CD4-positive, alpha-beta memory T cell (primary cell): ENCODE measurements at regions of chr20 and their contacts with region 1.

Region 1: GRCh38 chr20:21529863-21530262 is 16.0 kb upstream of the NKX2-2 start:
- DNase-seq: no peak
- H3K4me3 ChIP-seq: no peak overlapping the region
- H3K4me3 Mint-ChIP-seq: no peak overlapping the region
- H3K27ac ChIP-seq: no peak overlapping the region
- H3K27ac Mint-ChIP-seq: peak overlapping the region in 1 of 7 donors; percentile 49
- H3K4me1 ChIP-seq: no peaks in the 10 kb centered on the region
- H3K4me1 Mint-ChIP-seq: peaks cover 0 to 5% (median 3%) of the 10 kb centered on the region in 4 donors
- H3K27me3 ChIP-seq: peaks cover 13% of the 10 kb centered on the region
- H3K27me3 Mint-ChIP-seq: peaks cover 18 to 35% of the 10 kb centered on the region in 2 donors

Region 2: DNA sequence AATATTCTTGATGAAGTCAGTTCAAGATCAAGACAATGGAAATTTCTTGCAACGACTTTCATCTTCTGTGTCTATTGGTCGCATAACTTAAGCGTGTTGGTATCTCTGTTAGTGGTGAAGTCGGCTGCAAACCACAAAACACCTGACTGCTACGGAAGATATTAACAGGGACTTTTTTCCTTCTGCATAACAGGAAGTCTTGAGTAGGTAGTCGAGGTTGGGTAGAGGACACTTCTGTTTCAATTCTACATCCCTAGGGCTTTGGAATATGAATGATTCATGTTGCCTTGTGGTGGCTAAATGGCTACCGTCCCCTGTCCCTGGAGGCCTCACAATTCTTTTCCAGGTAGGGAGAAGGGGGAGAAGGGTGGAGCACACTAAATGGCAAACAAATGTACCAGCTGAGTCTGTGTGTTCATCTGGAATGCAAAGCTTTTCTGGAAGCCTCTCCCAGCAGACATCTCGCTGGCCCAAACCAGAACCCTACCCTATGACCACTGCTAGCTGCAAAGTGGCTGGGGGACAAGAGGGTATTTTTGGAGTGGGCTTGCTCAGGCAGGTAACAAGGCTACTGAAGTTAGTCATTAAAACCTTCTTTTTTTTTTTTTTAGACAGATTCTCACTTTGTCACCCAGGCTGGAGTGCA is 18.6 kb after region 1 on chr20:
- CTCF ChIA-PET with region 1: interaction called, 21 read pairs
- POLR2A ChIA-PET with region 1: interaction called, 3 read pairs
- intact Hi-C with region 1: loop called (anchors 2 kb)
- DNase-seq: peak; percentile 74 to 86 (median 80)
- H3K4me3 ChIP-seq: peak overlapping the region; percentile 10 to 32
- H3K4me3 Mint-ChIP-seq: peak overlapping the region; percentile 74 to 88 (median 80)
- H3K27ac ChIP-seq: peak overlapping the region; percentile 43
- H3K27ac Mint-ChIP-seq: peak overlapping the region; percentile 84 to 97 (median 95)
- H3K4me1 ChIP-seq: peaks cover 44% of the 10 kb centered on the region
- H3K4me1 Mint-ChIP-seq: peaks cover 22 to 41% (median 32%) of the 10 kb centered on the region in 4 donors
- H3K27me3 ChIP-seq: no peaks in the 10 kb centered on the region
- H3K27me3 Mint-ChIP-seq: no peaks in the 10 kb centered on the region

Region 3: DNA sequence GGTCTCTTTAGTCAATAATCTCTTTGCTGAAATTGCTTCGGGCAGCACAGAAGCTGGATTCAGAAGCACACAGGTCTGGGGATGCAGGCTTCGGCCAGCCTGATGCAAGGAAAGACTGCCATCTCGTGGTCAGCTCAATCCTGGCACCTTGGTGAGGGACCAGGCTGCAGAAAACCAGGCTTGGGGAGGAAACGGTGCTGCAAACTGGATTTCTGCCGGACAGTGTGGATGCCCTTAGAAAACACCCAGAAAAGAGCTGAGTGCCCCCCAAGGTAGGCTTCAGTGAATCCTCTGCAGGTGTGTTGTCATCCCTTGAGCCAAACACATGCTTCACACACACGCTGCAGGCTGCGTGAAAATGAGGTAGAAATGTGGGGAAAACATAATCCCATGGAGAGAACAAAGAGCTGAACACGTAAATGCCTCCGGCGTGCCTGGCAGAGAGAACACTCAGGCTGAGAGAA is 85.8 kb after region 1 on chr20:
- CTCF ChIA-PET with region 1: interaction called, 10 read pairs
- POLR2A ChIA-PET with region 1: no interaction called
- intact Hi-C with region 1: loop called (anchors 1 kb)
- DNase-seq: peak; percentile 19 to 42 (median 19)
- H3K4me3 ChIP-seq: no peak overlapping the region
- H3K4me3 Mint-ChIP-seq: no peak overlapping the region
- H3K27ac ChIP-seq: no peak overlapping the region
- H3K27ac Mint-ChIP-seq: no peak overlapping the region
- H3K4me1 ChIP-seq: no peaks in the 10 kb centered on the region
- H3K4me1 Mint-ChIP-seq: no peaks in the 10 kb centered on the region
- H3K27me3 ChIP-seq: no peaks in the 10 kb centered on the region
- H3K27me3 Mint-ChIP-seq: peaks cover 0 to 14% of the 10 kb centered on the region in 2 donors